MCF 10A (cell line): ENCODE measurements at regions of chr2 and their contacts with region 1.

Region 1: DNA sequence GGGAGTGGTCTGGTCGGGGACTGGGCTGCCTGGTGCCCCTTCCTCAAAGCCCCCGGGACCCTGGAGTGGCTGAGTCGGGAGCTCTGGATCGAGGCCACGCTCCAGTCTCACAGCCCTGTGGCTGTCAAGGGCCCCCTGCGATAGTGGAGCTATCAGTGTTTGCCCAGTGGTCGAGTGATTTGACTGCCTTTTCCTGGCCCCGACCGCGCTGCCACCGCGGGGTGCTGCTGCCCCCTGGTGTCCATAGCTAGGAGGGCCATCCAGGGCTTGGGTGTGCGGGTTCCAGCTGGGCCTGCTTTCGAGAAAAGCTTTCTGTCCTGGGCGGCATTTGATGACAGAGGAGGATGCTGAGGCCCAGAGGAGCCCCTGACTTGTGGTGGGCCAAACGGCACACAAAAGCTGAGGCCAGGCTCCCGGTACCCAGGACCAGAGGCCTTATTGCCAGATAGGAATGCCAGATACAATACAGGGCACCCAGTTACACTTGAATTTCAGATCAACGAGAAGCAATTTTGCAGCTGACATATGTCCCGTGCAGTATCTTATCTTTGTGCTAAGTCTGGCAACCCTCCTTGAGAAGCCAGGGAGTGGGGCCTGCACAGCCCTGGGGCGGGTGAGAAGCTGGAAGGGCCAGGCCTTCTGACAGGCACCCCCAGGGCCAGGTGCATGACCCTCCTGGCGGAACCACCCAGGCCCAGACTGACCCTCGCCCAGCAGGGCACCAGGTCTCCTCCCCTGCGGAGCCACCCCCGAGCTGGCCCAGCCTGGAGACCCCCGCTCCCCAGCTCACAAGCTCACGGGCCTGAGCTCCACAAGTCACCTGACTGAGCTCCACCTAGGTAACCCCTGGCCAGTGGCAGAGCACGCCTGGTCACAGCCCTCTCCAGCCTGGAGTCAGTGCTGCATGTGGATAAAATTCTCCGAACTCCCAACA is 13.0 kb downstream of the ODC1 start:
- DNase-seq: peak; percentile 81
- H3K4me3 Mint-ChIP-seq: no peak overlapping the region
- H3K27ac Mint-ChIP-seq: peak overlapping the region; percentile 29
- H3K4me1 Mint-ChIP-seq: no peaks in the 10 kb centered on the region
- H3K27me3 Mint-ChIP-seq: no peaks in the 10 kb centered on the region
- CTCF ChIP-seq: peak; percentile 96

Region 2: DNA sequence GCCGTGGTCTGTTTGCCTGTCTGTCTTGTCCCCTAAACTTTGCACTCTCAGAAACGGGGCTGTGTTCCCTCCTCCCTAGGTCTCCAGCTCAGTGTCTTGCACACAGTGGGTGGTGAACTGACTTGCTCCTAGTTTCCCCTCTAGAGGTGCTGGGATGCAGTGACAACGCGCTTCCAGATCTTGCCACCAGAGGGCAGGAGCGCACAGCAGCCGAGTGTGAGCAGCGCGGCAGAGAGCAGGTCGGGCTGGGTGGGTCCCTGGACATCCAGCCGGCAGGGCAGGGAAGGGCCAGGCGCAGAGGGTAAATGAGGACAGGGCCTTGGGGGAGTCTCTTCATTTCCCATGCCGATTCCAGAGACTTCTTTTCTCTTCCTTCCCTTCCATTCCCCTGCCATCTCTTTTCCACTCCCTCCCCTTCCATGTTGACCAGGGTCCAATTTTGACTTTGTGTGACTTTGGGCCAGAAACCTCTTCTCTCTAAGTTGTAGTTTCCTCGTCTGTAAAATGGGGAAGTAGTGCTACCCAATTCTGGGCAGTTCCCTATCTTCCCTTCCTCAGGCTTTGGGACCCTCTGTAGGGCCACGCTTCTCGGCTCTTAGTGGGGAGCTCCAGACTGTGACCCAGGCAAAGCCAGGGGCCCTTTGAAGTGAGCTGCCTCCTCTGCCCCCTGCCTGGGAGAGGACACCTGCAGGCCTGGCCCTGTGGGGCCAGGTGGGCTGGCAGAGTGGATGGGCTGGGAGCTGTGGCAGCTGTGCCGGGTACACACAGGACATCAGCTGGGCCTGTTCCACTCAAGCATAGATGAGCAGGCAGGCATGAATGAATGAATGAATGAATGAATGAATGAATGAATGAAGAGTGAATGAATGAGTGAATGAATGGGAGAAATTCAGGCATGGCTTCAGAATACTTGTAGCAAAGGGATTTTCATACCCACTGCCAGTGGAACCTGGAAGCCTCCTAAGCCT is 635.2 kb before region 1 on chr2:
- CTCF ChIA-PET with region 1: interaction called, 7 read pairs
- POLR2A ChIA-PET with region 1: no interaction called
- intact Hi-C with region 1: loop called (anchors 2 kb)
- DNase-seq: peak; percentile 87
- H3K4me3 Mint-ChIP-seq: peak overlapping the region; percentile 35
- H3K27ac Mint-ChIP-seq: peak overlapping the region; percentile 46
- H3K4me1 Mint-ChIP-seq: peaks cover 41% of the 10 kb centered on the region
- H3K27me3 Mint-ChIP-seq: no peaks in the 10 kb centered on the region
- CTCF ChIP-seq: peak; percentile 95

Region 3: DNA sequence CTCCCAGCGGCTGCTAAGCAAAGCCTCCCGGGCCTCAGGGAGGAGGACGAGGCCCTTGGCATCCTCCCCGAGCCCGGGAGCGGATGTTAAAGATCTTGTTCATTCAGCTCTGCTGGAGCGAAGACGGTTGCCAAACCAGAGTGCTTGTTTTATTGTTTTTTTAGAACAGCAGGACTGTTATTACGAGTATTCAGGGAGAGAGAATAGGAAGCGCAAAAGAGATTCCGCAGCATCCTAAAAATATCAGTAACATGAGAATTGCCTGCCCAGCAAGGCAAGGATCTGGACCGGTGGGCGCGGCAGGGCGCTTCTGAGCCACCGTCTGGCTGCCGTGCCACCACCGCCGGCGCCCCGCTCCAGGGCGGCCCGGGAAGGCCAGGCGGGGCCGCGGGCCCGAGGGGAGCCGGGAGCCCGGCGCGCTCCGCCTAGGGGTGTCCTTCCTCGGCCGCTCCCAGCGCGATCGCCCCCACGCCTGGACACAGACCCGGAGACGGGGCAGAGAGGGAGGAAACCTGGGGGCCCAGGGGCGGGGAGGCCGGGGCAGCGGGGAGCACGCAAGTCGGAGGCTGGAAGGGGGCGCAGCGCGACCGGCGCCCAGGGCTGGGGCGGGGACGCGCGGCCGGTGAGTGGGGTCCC is 355.8 kb before region 1 on chr2:
- CTCF ChIA-PET with region 1: interaction called, 141 read pairs
- POLR2A ChIA-PET with region 1: no interaction called
- intact Hi-C with region 1: no loop called
- DNase-seq: peak; percentile 30
- H3K4me3 Mint-ChIP-seq: peak overlapping the region; percentile 62
- H3K27ac Mint-ChIP-seq: no peak overlapping the region
- H3K4me1 Mint-ChIP-seq: no peaks in the 10 kb centered on the region
- H3K27me3 Mint-ChIP-seq: peaks cover 89% of the 10 kb centered on the region
- CTCF ChIP-seq: no peak

Region 4: GRCh38 chr2:10129490-10129889 is 305.7 kb before region 1 on chr2:
- CTCF ChIA-PET with region 1: interaction called, 90 read pairs
- POLR2A ChIA-PET with region 1: interaction called, 22 read pairs
- intact Hi-C with region 1: loop called (anchors 1 kb)
- DNase-seq: no peak
- H3K4me3 Mint-ChIP-seq: no peak overlapping the region
- H3K27ac Mint-ChIP-seq: peak overlapping the region; percentile 36
- H3K4me1 Mint-ChIP-seq: peaks cover 26% of the 10 kb centered on the region
- H3K27me3 Mint-ChIP-seq: no peaks in the 10 kb centered on the region
- CTCF ChIP-seq: no peak

Region 5: DNA sequence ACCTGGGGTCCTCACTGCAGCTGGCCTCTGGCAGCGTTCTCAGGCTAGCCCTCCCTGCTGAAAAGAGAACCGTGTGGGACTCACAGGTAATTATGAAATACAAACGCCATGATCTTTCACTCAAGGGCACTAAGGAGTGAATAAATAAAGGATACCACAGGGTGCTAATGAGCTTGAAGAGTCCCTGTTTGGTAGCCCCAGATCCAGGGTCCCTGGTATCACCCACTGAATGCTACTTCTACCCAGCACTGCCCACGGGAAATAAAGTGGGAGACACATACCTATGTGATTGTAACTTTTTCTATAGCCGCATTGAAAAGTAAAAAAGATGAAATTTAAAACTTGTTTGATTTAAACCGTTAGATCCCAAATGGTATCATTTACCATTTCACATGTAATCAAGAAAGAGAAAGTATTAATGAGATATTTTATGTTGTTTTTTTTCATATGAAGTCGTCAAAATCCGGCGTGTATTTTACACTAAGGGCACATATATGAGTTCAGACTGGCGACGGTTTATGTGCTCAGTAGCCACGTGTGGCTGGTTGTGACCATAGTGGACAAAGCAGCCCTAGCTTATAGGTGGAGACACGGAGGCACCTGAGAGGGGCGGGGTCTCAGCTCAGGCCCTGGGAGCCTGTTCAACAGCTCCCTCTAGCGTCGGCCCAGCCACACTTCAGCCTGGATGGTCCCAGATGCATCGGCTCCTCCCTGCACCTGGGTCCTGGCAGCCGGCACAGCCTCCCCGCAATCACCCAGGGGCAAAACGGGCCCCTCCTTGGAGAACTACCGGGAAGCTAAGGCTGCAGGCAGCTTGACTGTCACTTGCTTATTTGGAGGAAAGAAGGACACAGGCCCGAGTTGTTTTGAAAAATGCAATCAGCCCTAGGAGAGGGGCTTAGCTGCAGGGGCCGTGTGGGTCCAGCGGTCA is 26.2 kb before region 1 on chr2:
- CTCF ChIA-PET with region 1: interaction called, 34 read pairs
- POLR2A ChIA-PET with region 1: interaction called, 6 read pairs
- intact Hi-C with region 1: no loop called
- DNase-seq: peak; percentile 90
- H3K4me3 Mint-ChIP-seq: peak overlapping the region; percentile 58
- H3K27ac Mint-ChIP-seq: peak overlapping the region; percentile 72
- H3K4me1 Mint-ChIP-seq: peaks cover 53% of the 10 kb centered on the region
- H3K27me3 Mint-ChIP-seq: no peaks in the 10 kb centered on the region
- CTCF ChIP-seq: peak; percentile 97

Region 6: DNA sequence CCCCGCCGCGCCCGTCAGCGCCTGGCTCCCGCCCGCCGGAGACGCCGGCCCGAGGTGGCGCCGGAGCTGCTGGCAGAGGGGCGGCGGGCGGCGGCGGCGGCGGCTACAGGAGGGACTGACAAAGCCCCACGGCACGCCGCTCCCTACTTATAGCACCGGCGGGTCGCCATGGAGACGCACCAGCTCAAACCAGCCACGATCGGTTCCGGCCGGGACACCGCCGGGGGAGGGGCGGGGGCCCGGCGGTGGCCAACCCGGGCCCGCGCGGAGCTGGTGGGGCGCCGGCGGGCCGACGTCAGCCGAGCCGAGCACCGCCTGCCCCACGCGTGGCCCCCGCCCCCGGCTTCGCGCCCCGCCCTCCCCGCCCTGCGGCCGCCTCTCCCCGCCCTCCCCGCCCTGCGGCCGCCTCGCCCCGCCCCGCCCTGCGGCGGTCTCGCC is 13.1 kb after region 1 on chr2 and contains the start of gene ODC1:
- CTCF ChIA-PET with region 1: interaction called, 53 read pairs
- POLR2A ChIA-PET with region 1: interaction called, 12 read pairs
- intact Hi-C with region 1: no loop called
- DNase-seq: peak; percentile 86
- H3K4me3 Mint-ChIP-seq: peak within 1 kb of the TSS; percentile 93
- H3K27ac Mint-ChIP-seq: peak within 1 kb of the TSS; percentile 91
- H3K4me1 Mint-ChIP-seq: peaks cover 14% of the 10 kb centered on the region
- H3K27me3 Mint-ChIP-seq: no peaks in the 10 kb centered on the region
- CTCF ChIP-seq: no peak
- total RNA-seq, gene ODC1: 321 and 341 TPM in 2 replicates